Right ventricle myocardium superior (tissue), 1 donor: ENCODE measurements at regions of chr11 and their contacts with region 1.

Region 1: GRCh38 chr11:125568970-125569914 is at the start of gene EI24:
- DNase-seq: peak; percentile 96
- ATAC-seq: peak; percentile 100
- total RNA-seq, gene EI24: 53.0 TPM

Region 2: GRCh38 chr11:125376117-125376516 is 193.1 kb before region 1 on chr11:
- intact Hi-C with region 1: no loop called
- DNase-seq: peak; percentile 81
- ATAC-seq: peak; percentile 95

Region 3: GRCh38 chr11:125625630-125626287 is 56.5 kb after region 1 on chr11:
- intact Hi-C with region 1: loop called (anchors 10 kb)
- DNase-seq: peak; percentile 92
- ATAC-seq: peak; percentile 98